ENCODE measurements at regions of chr13 and their contacts with region 1.

Region 1: GRCh38 chr13:20940083-20940880 is 37.7 kb upstream of the XPO4 start:
- DNase-seq: no peak
- H3K4me3 ChIP-seq: no peak overlapping the region
- H3K27ac ChIP-seq: no peak overlapping the region
- H3K4me1 ChIP-seq: peaks cover 12% of the 10 kb centered on the region
- H3K27me3 ChIP-seq: no peaks in the 10 kb centered on the region
- CTCF ChIP-seq: no peak
- POLR2A ChIP-seq: no peak

Region 2: GRCh38 chr13:21130116-21130515 is 189.8 kb after region 1 on chr13:
- intact Hi-C with region 1: loop called (anchors 5 kb)
- DNase-seq: no peak
- H3K4me3 ChIP-seq: no peak overlapping the region
- H3K27ac ChIP-seq: no peak overlapping the region
- H3K4me1 ChIP-seq: no peaks in the 10 kb centered on the region
- H3K27me3 ChIP-seq: no peaks in the 10 kb centered on the region
- CTCF ChIP-seq: no peak
- POLR2A ChIP-seq: no peak

Measured in vagina (tissue), 2 donors.